Vagina (tissue), 2 donors: ENCODE measurements at regions of chr15 and their contacts with region 1.

Region 1: DNA sequence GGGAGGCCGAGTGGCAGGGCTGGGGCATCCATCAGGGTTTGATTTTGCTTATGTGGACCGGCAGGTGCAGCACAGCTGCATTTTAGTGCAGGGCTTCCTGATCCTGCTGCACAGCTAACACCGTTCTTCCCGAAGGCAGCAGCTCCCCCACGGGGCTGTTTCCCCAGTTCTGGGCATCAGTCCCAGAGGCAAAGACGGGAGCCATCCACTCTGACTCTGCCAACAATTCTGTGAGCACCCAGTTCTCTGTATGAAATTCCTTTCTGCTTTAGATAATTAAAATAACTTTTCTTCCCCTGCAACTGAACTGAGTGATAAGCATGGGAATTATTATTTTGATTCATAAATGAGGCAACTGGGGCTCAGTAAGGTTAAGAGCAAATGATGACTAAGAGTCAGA is 262.9 kb upstream of the ATP10A start:
- DNase-seq: no peak
- H3K4me3 ChIP-seq: no peak overlapping the region
- H3K27ac ChIP-seq: no peak overlapping the region
- H3K4me1 ChIP-seq: no peaks in the 10 kb centered on the region
- H3K27me3 ChIP-seq: no peaks in the 10 kb centered on the region
- CTCF ChIP-seq: no peak
- POLR2A ChIP-seq: no peak

Region 2: DNA sequence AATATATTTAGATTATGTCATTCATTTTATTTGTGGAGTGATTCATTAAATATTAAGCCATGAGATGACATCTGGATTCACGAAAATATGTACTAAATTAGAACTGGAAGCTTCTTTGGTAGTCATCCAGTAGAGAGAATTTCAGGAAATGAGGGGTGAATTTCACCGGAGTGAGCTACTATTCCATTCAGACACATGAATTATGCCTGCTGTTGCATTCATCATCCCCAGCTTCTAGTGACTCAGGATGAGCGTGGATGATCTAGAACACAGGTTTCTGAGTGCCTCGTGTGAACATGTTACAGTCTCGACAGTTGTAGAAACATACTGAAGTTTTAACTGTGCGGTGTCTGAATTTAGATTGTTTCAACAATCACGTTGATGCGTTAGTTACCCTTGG is 802.0 kb after region 1 on chr15:
- intact Hi-C with region 1: loop called (anchors 5 kb)
- DNase-seq: no peak
- H3K4me3 ChIP-seq: no peak overlapping the region
- H3K27ac ChIP-seq: no peak overlapping the region
- H3K4me1 ChIP-seq: no peaks in the 10 kb centered on the region
- H3K27me3 ChIP-seq: no peaks in the 10 kb centered on the region
- CTCF ChIP-seq: no peak
- POLR2A ChIP-seq: no peak